ENCODE measurements at regions of chr12 and their contacts with region 1.

Region 1: GRCh38 chr12:56321027-56321426 is 5.2 kb upstream of the CNPY2 start:
- DNase-seq: peak; percentile 26 to 86 (median 79)
- H3K4me3 ChIP-seq: no peak overlapping the region
- H3K27ac ChIP-seq: peak overlapping the region in 3 of 5 donors; percentile 36 to 68 (median 49)
- H3K4me1 ChIP-seq: peaks cover 0 to 6% of the 10 kb centered on the region in 2 donors
- H3K27me3 ChIP-seq: no peaks in the 10 kb centered on the region
- CTCF ChIP-seq: no peak
- POLR2A ChIP-seq: no peak

Region 2: DNA sequence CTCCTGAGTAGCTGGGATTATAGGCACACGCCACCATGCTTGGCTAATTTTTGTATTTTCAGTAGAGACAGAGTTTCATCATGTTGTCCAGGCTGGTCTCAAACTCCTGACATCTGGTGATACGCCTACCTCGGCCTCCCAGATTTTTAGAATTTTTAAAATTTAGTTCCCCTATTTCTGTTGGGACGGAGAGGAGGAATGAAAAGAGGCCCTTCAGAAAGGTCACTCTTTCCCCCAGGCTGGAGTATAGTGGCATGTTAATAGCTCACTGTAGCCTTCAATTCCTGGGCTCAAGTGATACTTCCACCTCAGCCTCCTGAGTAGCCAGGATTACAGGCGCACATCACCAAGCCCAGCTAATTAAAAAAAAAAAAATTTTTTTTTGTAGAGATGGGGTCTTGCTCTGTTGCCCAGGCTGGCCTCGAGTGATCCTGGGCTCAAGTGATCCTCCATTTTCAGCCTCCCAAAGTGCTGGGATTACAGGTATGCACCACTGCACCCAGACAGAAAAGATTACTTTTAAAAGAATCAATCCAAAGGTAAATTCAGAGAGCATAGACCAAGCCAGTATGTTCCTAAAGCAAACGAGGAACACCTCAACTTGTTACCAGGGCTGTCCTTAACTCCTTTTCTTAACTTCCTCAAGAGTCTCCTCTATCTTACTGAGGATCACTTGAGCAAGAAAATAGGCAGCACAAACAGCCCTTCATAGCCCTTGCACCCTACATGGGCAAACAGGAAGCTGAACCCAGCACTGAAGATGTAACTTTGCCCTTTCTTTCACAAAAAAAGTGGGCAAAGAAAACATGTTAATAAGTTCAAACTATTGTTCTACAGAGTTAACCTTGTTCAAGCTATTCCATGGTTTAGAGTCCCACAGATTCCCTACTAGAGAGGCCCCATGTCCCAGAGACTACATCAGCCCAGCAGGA is 32.3 kb before region 1 on chr12:
- intact Hi-C with region 1: no loop called
- DNase-seq: no peak
- H3K4me3 ChIP-seq: no peak overlapping the region
- H3K27ac ChIP-seq: peak overlapping the region in 1 of 5 donors; percentile 4
- H3K4me1 ChIP-seq: peaks cover 6 to 30% of the 10 kb centered on the region in 2 donors
- H3K27me3 ChIP-seq: no peaks in the 10 kb centered on the region
- CTCF ChIP-seq: no peak
- POLR2A ChIP-seq: no peak

Region 3: GRCh38 chr12:56468216-56469006 is 147.4 kb after region 1 on chr12 and contains the start of gene SPRYD4:
- intact Hi-C with region 1: loop called in 1 of 2 experiments (anchors 10 kb)
- DNase-seq: peak; percentile 93 to 96 (median 94)
- H3K4me3 ChIP-seq: peak within 1 kb of the TSS; percentile 20 to 87 (median 44)
- H3K27ac ChIP-seq: peak within 1 kb of the TSS; percentile 81 to 95 (median 92)
- H3K4me1 ChIP-seq: peaks cover 8 to 25% of the 10 kb centered on the region in 2 donors
- H3K27me3 ChIP-seq: no peaks in the 10 kb centered on the region
- CTCF ChIP-seq: peak in 1 of 6 experiments; percentile 26
- POLR2A ChIP-seq: peak; percentile 72 to 88
- total RNA-seq, gene SPRYD4: 2.8 to 6.5 (median 5.3) TPM

Measured in adrenal gland (tissue), 19 donors.